Endothelial cell of umbilical vein (primary cell): ENCODE measurements at regions of chr9 and their contacts with region 1.

Region 1: GRCh38 chr9:114108016-114108833 is 9.1 kb upstream of the KIF12 start:
- DNase-seq: peak; percentile 74
- H3K4me3 ChIP-seq: no peak overlapping the region
- H3K27ac ChIP-seq: no peak overlapping the region
- H3K4me1 ChIP-seq: peaks cover 10% of the 10 kb centered on the region
- H3K27me3 ChIP-seq: peaks cover 3 to 7% of the 10 kb centered on the region in 2 experiments
- CTCF ChIP-seq: peak; percentile 97 to 99
- POLR2A ChIP-seq: no peak

Region 2: DNA sequence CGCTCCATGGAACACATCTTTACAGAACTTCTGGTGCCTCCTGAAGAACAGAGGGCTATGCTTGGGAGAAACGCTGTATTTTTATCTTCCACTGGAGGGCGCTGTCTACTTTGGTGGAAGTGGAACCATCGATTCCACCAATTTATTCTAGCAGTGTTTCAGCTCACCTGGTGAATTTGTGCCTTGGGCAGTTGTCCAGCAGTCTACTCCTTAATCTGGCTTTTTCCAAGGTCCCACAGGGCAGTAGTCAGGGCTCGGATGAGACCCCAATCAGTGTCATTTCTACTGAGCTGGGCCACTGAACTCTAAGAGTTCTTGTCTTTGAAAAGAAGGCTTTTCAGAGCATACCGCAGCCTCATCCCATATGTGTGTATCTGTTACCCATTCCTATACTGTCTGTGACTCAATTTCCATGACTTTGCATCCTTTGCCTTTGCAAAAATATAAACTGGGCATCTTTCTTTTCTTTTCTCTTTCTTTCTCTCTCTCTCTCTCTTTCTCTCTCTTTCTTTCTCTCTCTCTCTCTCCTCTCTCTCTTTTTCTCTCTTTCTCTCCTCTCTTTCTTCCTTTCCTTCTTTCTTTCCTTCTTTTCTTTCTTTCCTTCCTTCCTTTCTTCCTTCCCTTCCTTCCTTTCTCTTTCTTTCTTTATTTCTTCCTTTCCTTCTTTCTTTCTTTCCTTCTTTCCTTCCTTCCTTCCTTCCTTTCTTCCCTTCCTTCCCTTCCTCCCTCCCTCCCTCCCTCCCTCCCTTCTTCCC is 370.5 kb before region 1 on chr9:
- CTCF ChIA-PET with region 1: interaction called, 4 read pairs
- POLR2A ChIA-PET with region 1: no interaction called
- dilution Hi-C with region 1: no loop called
- intact Hi-C with region 1: loop called (anchors 1 kb)
- DNase-seq: peak; percentile 69
- H3K4me3 ChIP-seq: no peak overlapping the region
- H3K27ac ChIP-seq: no peak overlapping the region
- H3K4me1 ChIP-seq: no peaks in the 10 kb centered on the region
- H3K27me3 ChIP-seq: peaks cover 6 to 13% of the 10 kb centered on the region in 2 experiments
- CTCF ChIP-seq: peak; percentile 72 to 78
- POLR2A ChIP-seq: no peak

Region 3: DNA sequence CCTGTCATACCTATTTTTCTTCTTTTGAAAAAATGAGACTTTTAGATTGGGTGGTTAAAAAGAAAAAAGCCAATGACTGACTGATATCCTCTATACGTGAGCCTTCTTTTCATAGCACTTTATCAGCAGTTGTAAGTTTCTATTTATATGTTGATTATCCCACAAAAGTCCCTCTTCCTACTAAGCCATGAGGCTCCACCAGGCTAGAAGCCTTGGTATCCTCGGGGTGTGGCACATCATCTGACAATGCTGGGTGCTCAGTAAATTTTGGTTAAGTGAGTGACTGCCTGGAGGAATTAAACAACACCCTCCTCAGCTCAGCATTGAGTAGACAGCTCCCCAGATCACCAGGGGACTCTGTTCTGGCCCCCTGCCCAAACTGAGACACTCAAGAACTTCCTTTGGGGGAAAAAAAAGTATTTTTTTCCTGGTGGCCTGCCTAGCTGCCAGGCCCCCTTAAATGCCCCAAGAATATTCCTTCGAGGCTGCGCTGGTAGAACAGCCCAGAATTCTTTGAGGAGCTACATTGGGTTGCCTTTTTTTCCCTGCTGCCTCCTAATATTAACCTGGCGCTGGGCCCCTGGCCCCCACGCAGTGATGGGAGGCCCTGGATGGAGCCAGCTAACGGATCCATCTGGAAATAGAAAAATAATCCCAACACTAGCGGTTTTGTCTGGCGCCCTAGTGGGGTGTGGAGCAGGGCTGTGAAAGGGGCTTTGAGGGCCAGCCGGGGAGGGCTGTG is 23.8 kb after region 1 on chr9:
- CTCF ChIA-PET with region 1: interaction called, 13 read pairs
- POLR2A ChIA-PET with region 1: no interaction called
- dilution Hi-C with region 1: no loop called
- intact Hi-C with region 1: no loop called
- DNase-seq: no peak
- H3K4me3 ChIP-seq: no peak overlapping the region
- H3K27ac ChIP-seq: no peak overlapping the region
- H3K4me1 ChIP-seq: no peaks in the 10 kb centered on the region
- H3K27me3 ChIP-seq: peaks cover 25 to 36% of the 10 kb centered on the region in 2 experiments
- CTCF ChIP-seq: no peak
- POLR2A ChIP-seq: no peak

Region 4: GRCh38 chr9:114174876-114175771 is 66.9 kb after region 1 on chr9:
- CTCF ChIA-PET with region 1: interaction called, 12 read pairs
- POLR2A ChIA-PET with region 1: no interaction called
- dilution Hi-C with region 1: no loop called
- intact Hi-C with region 1: no loop called
- DNase-seq: no peak
- H3K4me3 ChIP-seq: no peak overlapping the region
- H3K27ac ChIP-seq: no peak overlapping the region
- H3K4me1 ChIP-seq: peaks cover 19% of the 10 kb centered on the region
- H3K27me3 ChIP-seq: no peaks in the 10 kb centered on the region
- CTCF ChIP-seq: no peak
- POLR2A ChIP-seq: no peak

Region 5: GRCh38 chr9:114263853-114264510 is 155.8 kb after region 1 on chr9:
- CTCF ChIA-PET with region 1: interaction called, 83 read pairs
- POLR2A ChIA-PET with region 1: no interaction called
- dilution Hi-C with region 1: no loop called
- intact Hi-C with region 1: loop called (anchors 1 kb)
- DNase-seq: no peak
- H3K4me3 ChIP-seq: no peak overlapping the region
- H3K27ac ChIP-seq: no peak overlapping the region
- H3K4me1 ChIP-seq: no peaks in the 10 kb centered on the region
- H3K27me3 ChIP-seq: no peaks in the 10 kb centered on the region
- CTCF ChIP-seq: peak in 1 of 2 donors; percentile 28
- POLR2A ChIP-seq: no peak

Region 6: GRCh38 chr9:114285166-114285867 is 177.1 kb after region 1 on chr9:
- CTCF ChIA-PET with region 1: interaction called, 277 read pairs
- POLR2A ChIA-PET with region 1: interaction called, 3 read pairs
- dilution Hi-C with region 1: no loop called
- intact Hi-C with region 1: no loop called
- DNase-seq: peak; percentile 37
- H3K4me3 ChIP-seq: no peak overlapping the region
- H3K27ac ChIP-seq: no peak overlapping the region
- H3K4me1 ChIP-seq: no peaks in the 10 kb centered on the region
- H3K27me3 ChIP-seq: no peaks in the 10 kb centered on the region
- CTCF ChIP-seq: no peak
- POLR2A ChIP-seq: no peak

Region 7: GRCh38 chr9:114304416-114305188 is 196.4 kb after region 1 on chr9:
- CTCF ChIA-PET with region 1: interaction called, 24 read pairs
- POLR2A ChIA-PET with region 1: no interaction called
- dilution Hi-C with region 1: no loop called
- intact Hi-C with region 1: loop called (anchors 1 kb)
- DNase-seq: no peak
- H3K4me3 ChIP-seq: no peak overlapping the region
- H3K27ac ChIP-seq: no peak overlapping the region
- H3K4me1 ChIP-seq: no peaks in the 10 kb centered on the region
- H3K27me3 ChIP-seq: no peaks in the 10 kb centered on the region
- CTCF ChIP-seq: no peak
- POLR2A ChIP-seq: no peak